CD8-positive, alpha-beta T cell (primary cell): ENCODE measurements at regions of chr9 and their contacts with region 1.

Region 1: DNA sequence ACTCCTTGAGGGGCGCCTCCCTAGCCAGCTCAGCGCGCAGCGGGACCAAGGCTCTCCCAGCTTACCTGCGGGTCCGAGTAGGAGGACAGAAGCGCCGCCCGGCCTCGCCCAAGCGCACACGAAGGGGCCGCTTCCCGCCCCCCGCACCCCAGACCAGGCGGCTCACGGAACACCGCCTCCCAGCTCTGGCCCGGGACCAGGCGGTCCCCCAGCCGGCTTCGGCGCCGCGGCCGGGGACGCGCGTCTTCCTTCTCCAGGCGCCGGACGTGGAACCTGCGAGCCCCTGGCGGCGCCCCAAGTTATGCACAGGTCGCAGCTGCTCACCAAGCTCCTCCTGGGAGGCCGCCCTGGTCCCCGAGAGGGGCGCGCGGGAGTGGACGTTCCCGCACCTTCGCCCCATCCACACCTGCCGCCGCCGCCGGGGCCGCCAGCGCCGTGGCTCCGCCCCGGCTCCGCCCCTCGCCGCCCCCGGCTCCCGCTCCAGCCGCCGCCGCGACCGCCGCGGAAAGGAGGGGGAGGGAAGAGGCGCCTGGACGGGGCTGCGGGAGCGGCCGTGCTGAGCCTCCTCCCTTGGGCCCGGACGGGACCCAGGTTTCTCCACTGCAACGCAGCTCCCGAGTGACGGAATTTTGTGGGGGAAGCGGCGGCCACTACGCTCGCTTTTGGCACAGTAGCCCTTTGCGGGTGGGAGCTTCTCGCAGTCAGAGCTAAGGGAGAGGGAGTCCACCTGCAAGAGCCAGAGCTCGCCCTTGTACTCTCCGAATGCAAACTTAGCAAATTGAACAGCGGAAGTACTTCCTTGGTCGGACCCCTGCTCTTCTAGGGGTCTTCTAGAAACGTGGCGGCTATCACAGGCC is 77.5 kb upstream of the IFNE start:
- DNase-seq: peak; percentile 15 to 74 (median 56)
- ATAC-seq: peak; percentile 82
- H3K4me3 ChIP-seq: peak overlapping the region; percentile 57 to 78
- H3K4me3 Mint-ChIP-seq: peak overlapping the region; percentile 98
- H3K27ac ChIP-seq: peak overlapping the region in 1 of 2 experiments; percentile 33
- H3K27ac Mint-ChIP-seq: peak overlapping the region; percentile 73
- H3K4me1 ChIP-seq: peaks cover 22% of the 10 kb centered on the region
- H3K4me1 Mint-ChIP-seq: peaks cover 40% of the 10 kb centered on the region
- H3K27me3 ChIP-seq: peaks cover 0 to 24% of the 10 kb centered on the region in 2 experiments
- H3K27me3 Mint-ChIP-seq: peaks cover 17% of the 10 kb centered on the region
- CTCF ChIP-seq: peak; percentile 19

Region 2: DNA sequence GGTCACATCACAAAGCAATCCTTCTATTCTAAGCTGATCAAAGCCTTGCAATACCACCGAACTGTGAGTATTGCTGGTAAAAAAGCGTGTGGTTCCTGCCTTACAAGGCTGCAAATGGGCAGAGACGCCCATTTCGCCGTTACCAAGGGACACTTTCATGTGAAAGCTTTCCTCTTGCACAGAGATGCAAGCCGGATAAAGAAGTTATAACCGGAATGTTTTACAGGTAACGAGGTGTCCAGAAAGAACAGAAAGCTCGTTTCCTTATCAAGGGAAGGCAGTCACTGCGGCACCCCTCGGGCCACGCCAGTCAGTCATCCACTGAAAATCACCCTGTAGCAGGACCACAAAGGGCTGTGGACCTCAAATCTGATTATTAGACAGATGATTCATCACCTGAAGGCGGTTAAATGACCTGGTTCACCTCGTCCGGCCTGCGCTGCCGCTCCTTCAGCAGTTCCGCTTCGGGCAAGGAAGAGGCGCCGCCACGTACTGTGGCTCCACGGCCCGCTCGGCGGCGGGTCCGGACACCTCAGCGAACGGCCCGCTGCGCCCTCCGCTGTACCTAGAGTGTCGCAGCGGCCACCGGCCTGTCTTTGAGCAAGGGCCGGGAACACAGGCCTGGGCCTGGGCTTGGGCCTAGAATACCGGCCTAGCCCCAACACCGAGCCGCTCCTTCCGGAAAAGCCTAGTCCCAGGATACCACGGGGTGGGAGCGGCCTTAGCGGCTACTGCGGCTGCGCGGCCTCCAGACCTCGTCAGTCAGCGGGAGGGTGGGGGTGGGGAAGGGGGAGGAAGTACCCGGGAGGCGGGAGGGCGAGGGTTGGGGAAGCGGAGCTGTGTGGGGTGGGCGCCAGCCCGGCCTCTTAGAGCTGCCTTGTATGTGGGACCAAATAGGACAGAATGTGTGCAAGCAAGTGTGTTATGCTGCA is 224.7 kb before region 1 on chr9 and contains the start of gene KLHL9:
- CTCF ChIA-PET with region 1: interaction called, 3 read pairs
- POLR2A ChIA-PET with region 1: no interaction called
- intact Hi-C with region 1: loop called in 1 of 2 experiments (anchors 1 kb)
- DNase-seq: peak; percentile 64 to 94 (median 86)
- ATAC-seq: peak; percentile 84
- H3K4me3 ChIP-seq: peak within 1 kb of the TSS; percentile 67 to 88
- H3K4me3 Mint-ChIP-seq: peak within 1 kb of the TSS; percentile 92
- H3K27ac ChIP-seq: peak within 1 kb of the TSS; percentile 93 to 96
- H3K27ac Mint-ChIP-seq: peak within 1 kb of the TSS; percentile 96
- H3K4me1 ChIP-seq: peaks cover 45% of the 10 kb centered on the region
- H3K4me1 Mint-ChIP-seq: peaks cover 56% of the 10 kb centered on the region
- H3K27me3 ChIP-seq: no peaks in the 10 kb centered on the region
- H3K27me3 Mint-ChIP-seq: no peaks in the 10 kb centered on the region
- CTCF ChIP-seq: no peak
- total RNA-seq, gene KLHL9: 11.2 to 11.4 TPM

Region 3: DNA sequence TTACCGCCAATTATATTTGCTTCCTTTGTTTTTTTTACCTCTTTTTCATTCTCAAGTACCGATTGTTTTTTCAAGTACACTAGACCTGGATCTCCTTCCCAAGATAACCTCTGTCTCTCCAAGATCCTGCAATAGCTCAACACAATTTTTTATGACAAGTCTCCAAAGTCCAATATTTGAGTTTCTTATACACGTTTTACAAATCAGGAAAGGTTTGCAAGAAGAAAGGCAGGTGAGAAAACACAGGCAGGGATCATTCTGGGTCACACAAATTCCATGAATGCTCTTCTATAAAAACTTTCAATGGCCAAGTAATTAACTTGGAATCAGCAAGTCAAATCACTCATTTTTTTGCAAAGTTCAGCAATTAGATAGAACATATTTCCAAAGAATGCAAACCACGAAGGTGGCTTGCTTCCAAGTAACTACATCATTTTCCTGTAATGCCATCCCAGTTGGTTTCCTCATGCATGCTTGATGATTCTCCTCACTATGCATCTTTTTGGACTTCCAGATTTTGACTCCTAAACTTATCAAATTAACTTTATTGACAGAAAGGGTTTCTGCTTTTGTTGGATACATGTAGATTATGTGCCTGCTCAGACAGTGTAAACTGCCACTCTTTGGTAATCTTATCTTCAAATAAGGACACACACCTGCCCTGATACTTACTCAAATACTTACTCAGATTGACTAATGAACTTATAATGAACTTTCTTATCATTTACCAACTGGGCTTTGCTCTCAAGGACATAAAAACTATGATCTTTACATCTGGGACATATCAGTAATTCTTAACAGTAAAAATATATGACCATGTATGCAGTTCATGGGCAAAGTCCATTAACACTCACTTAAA is 52.8 kb before region 1 on chr9:
- CTCF ChIA-PET with region 1: no interaction called
- POLR2A ChIA-PET with region 1: interaction called, 3 read pairs
- intact Hi-C with region 1: loop called in 1 of 2 experiments (anchors 5 kb)
- DNase-seq: no peak
- ATAC-seq: no peak
- H3K4me3 ChIP-seq: no peak overlapping the region
- H3K4me3 Mint-ChIP-seq: no peak overlapping the region
- H3K27ac ChIP-seq: no peak overlapping the region
- H3K27ac Mint-ChIP-seq: no peak overlapping the region
- H3K4me1 ChIP-seq: peaks cover 14% of the 10 kb centered on the region
- H3K4me1 Mint-ChIP-seq: peaks cover 16% of the 10 kb centered on the region
- H3K27me3 ChIP-seq: no peaks in the 10 kb centered on the region
- H3K27me3 Mint-ChIP-seq: no peaks in the 10 kb centered on the region
- CTCF ChIP-seq: no peak

Region 4: DNA sequence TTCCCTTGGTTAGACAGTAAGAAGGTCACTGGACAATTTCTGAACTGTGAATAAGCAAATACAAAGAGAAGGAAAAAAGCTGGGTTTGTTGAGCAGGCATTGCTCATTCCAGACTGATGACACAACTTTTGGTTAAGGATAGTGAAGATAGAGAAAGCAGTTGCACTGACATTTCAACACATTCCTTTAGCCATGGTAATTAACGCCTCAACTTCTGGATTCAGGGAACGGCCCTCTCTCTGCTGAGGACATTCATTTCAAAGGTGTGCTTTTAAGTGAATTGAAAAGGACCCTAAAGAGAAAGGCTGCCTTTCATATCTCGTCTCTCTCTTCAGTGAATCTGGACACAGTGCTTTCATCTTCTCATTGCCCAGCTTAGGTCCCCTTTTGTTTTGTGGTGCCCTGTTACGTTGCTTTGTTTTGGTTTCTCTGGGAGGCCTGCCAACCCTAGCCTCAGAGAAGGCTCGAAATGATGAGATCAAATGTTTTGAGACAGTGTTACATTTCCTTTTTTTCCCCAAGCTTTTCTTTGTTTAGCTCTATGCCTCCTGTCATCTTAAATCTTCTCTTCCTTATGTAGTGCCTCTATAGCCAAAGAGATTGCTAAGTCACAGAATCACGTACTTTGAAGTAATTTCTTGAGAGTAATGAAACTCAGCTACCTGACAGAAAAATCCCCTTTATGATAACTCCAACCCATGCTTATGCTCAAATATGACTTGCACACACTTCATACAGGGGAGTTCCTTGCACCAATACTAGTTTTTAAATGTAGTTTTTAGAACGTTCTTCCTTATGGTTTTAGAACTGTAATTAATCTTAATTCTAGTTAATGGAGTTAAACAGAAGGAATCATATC is 16.9 kb after region 1 on chr9:
- CTCF ChIA-PET with region 1: interaction called, 22 read pairs
- POLR2A ChIA-PET with region 1: interaction called, 13 read pairs
- intact Hi-C with region 1: loop called in 1 of 2 experiments (anchors 1 kb)
- DNase-seq: peak in 5 of 9 experiments; percentile 26 to 78 (median 63)
- ATAC-seq: peak; percentile 70
- H3K4me3 ChIP-seq: no peak overlapping the region
- H3K4me3 Mint-ChIP-seq: peak overlapping the region; percentile 68
- H3K27ac ChIP-seq: peak overlapping the region in 1 of 2 experiments; percentile 22
- H3K27ac Mint-ChIP-seq: peak overlapping the region; percentile 93
- H3K4me1 ChIP-seq: peaks cover 40% of the 10 kb centered on the region
- H3K4me1 Mint-ChIP-seq: peaks cover 43% of the 10 kb centered on the region
- H3K27me3 ChIP-seq: peaks cover 0 to 2% of the 10 kb centered on the region in 2 experiments
- H3K27me3 Mint-ChIP-seq: no peaks in the 10 kb centered on the region
- CTCF ChIP-seq: no peak

Region 5: DNA sequence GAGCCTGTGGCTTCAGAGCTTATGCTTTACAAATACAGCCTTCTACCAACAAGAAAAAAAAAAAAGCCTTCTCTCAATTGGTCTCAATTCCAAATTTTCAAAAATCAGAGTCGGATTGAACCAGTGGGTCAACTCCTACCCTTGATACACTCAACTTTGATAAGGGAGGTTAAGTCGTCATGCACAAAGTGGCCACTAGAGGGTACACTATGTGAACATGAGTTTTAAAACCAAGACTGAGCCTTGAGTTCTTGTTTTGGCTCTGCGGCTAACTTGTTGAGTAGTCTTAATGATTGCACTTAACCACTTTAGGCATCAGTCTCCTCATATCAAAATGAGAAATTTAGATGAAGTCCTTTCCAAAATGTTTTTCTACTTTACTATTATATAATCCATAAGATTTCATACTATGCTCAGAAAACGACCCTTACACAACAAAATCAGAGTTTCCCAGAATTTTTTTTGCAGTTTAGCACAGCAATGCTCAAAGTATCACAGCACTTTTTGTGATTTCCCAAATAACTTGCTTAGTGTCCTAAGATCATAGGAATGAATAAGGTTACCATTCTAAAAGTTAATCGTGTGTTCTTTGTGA is 149.9 kb after region 1 on chr9:
- CTCF ChIA-PET with region 1: interaction called, 36 read pairs
- POLR2A ChIA-PET with region 1: interaction called, 3 read pairs
- intact Hi-C with region 1: loop called in 1 of 2 experiments (anchors 10 kb)
- DNase-seq: peak; percentile 35 to 75 (median 65)
- ATAC-seq: peak; percentile 81
- H3K4me3 ChIP-seq: no peak overlapping the region
- H3K4me3 Mint-ChIP-seq: no peak overlapping the region
- H3K27ac ChIP-seq: no peak overlapping the region
- H3K27ac Mint-ChIP-seq: no peak overlapping the region
- H3K4me1 ChIP-seq: no peaks in the 10 kb centered on the region
- H3K4me1 Mint-ChIP-seq: peaks cover 20% of the 10 kb centered on the region
- H3K27me3 ChIP-seq: no peaks in the 10 kb centered on the region
- H3K27me3 Mint-ChIP-seq: no peaks in the 10 kb centered on the region
- CTCF ChIP-seq: peak; percentile 84

Region 6: GRCh38 chr9:21802195-21803000 is 242.7 kb after region 1 on chr9 and contains the start of gene MTAP:
- CTCF ChIA-PET with region 1: no interaction called
- POLR2A ChIA-PET with region 1: interaction called, 3 read pairs
- intact Hi-C with region 1: loop called (anchors 5 kb)
- DNase-seq: peak; percentile 12 to 80 (median 65)
- ATAC-seq: peak; percentile 74
- H3K4me3 ChIP-seq: peak within 1 kb of the TSS; percentile 80 to 91
- H3K4me3 Mint-ChIP-seq: peak within 1 kb of the TSS; percentile 99
- H3K27ac ChIP-seq: peak within 1 kb of the TSS; percentile 63 to 67
- H3K27ac Mint-ChIP-seq: peak within 1 kb of the TSS; percentile 97
- H3K4me1 ChIP-seq: peaks cover 31% of the 10 kb centered on the region
- H3K4me1 Mint-ChIP-seq: peaks cover 42% of the 10 kb centered on the region
- H3K27me3 ChIP-seq: no peaks in the 10 kb centered on the region
- H3K27me3 Mint-ChIP-seq: peaks cover 5% of the 10 kb centered on the region
- CTCF ChIP-seq: no peak
- total RNA-seq, gene MTAP: 9.9 to 14.3 TPM